B cell (primary cell): ENCODE measurements at regions of chr6 and their contacts with region 1.

Region 1: DNA sequence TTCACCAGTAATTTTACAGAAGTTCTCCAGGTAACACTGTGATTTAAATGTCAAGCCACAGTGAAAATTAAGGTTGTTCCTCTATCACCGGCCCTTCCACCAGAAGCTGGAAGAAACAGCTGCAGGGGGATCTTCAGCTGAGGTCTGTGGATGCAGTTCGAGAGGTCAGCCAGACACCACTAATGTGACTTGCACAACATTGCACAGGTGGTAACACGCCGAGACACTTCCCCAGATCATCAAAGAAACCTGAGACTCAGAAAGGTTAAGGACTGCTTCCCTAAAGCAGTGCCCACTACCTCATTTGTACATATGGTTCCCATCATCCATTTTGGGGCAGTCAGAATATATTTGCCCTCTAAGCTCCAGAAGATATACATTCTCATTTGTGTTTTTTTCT is 8.1 kb upstream of the SERPINB9 start:
- DNase-seq: peak; percentile 78
- ATAC-seq: peak; percentile 83
- H3K4me3 ChIP-seq: no peak overlapping the region
- H3K4me3 Mint-ChIP-seq: peak overlapping the region; percentile 64
- H3K27ac ChIP-seq: peak overlapping the region; percentile 54 to 62
- H3K27ac Mint-ChIP-seq: peak overlapping the region; percentile 85
- H3K4me1 ChIP-seq: peaks cover 24 to 27% of the 10 kb centered on the region in 2 donors
- H3K4me1 Mint-ChIP-seq: peaks cover 36% of the 10 kb centered on the region
- H3K27me3 ChIP-seq: no peaks in the 10 kb centered on the region
- H3K27me3 Mint-ChIP-seq: no peaks in the 10 kb centered on the region
- CTCF ChIP-seq: no peak

Region 2: GRCh38 chr6:2684059-2684749 is 227.0 kb before region 1 on chr6:
- CTCF ChIA-PET with region 1: no interaction called
- POLR2A ChIA-PET with region 1: no interaction called
- intact Hi-C with region 1: no loop called
- DNase-seq: no peak
- ATAC-seq: no peak
- H3K4me3 ChIP-seq: no peak overlapping the region
- H3K4me3 Mint-ChIP-seq: no peak overlapping the region
- H3K27ac ChIP-seq: no peak overlapping the region
- H3K27ac Mint-ChIP-seq: no peak overlapping the region
- H3K4me1 ChIP-seq: no peaks in the 10 kb centered on the region
- H3K4me1 Mint-ChIP-seq: no peaks in the 10 kb centered on the region
- H3K27me3 ChIP-seq: no peaks in the 10 kb centered on the region
- H3K27me3 Mint-ChIP-seq: no peaks in the 10 kb centered on the region
- CTCF ChIP-seq: no peak

Region 3: GRCh38 chr6:2804516-2804915 is 106.7 kb before region 1 on chr6:
- CTCF ChIA-PET with region 1: no interaction called
- POLR2A ChIA-PET with region 1: no interaction called
- intact Hi-C with region 1: no loop called
- DNase-seq: no peak
- ATAC-seq: no peak
- H3K4me3 ChIP-seq: no peak overlapping the region
- H3K4me3 Mint-ChIP-seq: no peak overlapping the region
- H3K27ac ChIP-seq: no peak overlapping the region
- H3K27ac Mint-ChIP-seq: no peak overlapping the region
- H3K4me1 ChIP-seq: no peaks in the 10 kb centered on the region
- H3K4me1 Mint-ChIP-seq: no peaks in the 10 kb centered on the region
- H3K27me3 ChIP-seq: no peaks in the 10 kb centered on the region
- H3K27me3 Mint-ChIP-seq: no peaks in the 10 kb centered on the region
- CTCF ChIP-seq: no peak

Region 4: DNA sequence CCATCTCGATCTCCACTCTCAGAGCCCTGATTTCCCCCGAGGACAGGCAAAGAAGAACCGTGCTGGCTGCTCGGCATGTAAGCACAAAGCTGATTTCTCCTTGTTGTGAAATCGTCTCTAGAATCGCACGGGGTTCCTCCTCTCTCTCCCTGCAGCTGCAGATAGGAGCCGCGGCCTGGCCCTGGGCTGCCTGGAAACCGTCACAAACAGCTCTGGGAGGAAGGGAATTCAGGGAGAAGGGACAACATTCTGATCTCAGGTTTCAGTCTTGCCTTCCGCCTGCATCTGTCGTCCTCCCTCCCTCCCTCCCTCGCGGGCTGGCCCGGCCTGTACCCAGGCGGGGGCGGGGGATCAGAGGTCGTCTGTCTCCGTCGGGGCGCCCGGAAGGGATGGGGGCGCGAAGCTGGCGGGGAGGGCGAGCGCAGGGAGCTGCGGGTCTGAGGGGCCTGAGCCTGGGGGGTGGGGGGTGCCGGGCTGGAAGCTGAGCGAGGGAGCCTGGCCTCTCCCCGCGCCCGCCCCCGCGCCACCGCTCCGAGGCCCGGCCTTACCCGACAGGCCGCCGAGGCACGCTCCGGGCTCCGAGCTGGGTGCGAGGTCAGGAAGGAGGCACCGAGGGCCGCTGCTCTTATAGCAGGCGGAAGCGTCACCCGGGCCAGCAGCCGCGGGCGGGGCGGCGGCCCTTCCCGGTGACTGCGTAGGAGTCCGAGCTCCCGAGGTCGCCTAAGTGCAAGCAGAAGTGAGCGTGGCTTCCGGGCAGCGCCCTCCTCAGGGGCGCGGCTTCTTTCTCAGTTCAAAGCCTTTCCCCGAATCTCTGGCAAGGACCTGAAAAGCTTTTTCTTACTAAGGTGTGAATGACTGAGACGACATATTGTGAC is 69.7 kb before region 1 on chr6 and contains the start of gene SERPINB1:
- CTCF ChIA-PET with region 1: interaction called, 165 read pairs
- POLR2A ChIA-PET with region 1: interaction called, 10 read pairs
- intact Hi-C with region 1: loop called (anchors 1 kb)
- DNase-seq: peak; percentile 86
- ATAC-seq: peak; percentile 79
- H3K4me3 ChIP-seq: peak within 1 kb of the TSS; percentile 55 to 85 (median 72)
- H3K4me3 Mint-ChIP-seq: peak within 1 kb of the TSS; percentile 90
- H3K27ac ChIP-seq: peak within 1 kb of the TSS; percentile 61 to 87
- H3K27ac Mint-ChIP-seq: peak within 1 kb of the TSS; percentile 96
- H3K4me1 ChIP-seq: peaks cover 35 to 45% of the 10 kb centered on the region in 2 donors
- H3K4me1 Mint-ChIP-seq: peaks cover 50% of the 10 kb centered on the region
- H3K27me3 ChIP-seq: no peaks in the 10 kb centered on the region
- H3K27me3 Mint-ChIP-seq: no peaks in the 10 kb centered on the region
- CTCF ChIP-seq: no peak
- total RNA-seq, gene SERPINB1: 47.4 and 52.5 TPM in 2 replicates

Region 5: GRCh38 chr6:2862712-2863181 is 48.4 kb before region 1 on chr6:
- CTCF ChIA-PET with region 1: interaction called, 10 read pairs
- POLR2A ChIA-PET with region 1: interaction called, 5 read pairs
- intact Hi-C with region 1: no loop called
- DNase-seq: peak; percentile 84
- ATAC-seq: peak; percentile 48
- H3K4me3 ChIP-seq: peak overlapping the region in 1 of 5 experiments; percentile 2
- H3K4me3 Mint-ChIP-seq: peak overlapping the region; percentile 72
- H3K27ac ChIP-seq: peak overlapping the region; percentile 91 to 97
- H3K27ac Mint-ChIP-seq: peak overlapping the region; percentile 95
- H3K4me1 ChIP-seq: peaks cover 71 to 75% of the 10 kb centered on the region in 2 donors
- H3K4me1 Mint-ChIP-seq: peaks cover 81% of the 10 kb centered on the region
- H3K27me3 ChIP-seq: no peaks in the 10 kb centered on the region
- H3K27me3 Mint-ChIP-seq: no peaks in the 10 kb centered on the region
- CTCF ChIP-seq: no peak

Region 6: GRCh38 chr6:2891768-2892170 is 19.4 kb before region 1 on chr6:
- CTCF ChIA-PET with region 1: interaction called, 18 read pairs
- POLR2A ChIA-PET with region 1: interaction called, 9 read pairs
- intact Hi-C with region 1: no loop called
- DNase-seq: peak; percentile 87
- ATAC-seq: peak; percentile 90
- H3K4me3 ChIP-seq: peak overlapping the region in 4 of 5 experiments; percentile 5 to 34 (median 16)
- H3K4me3 Mint-ChIP-seq: peak overlapping the region; percentile 86
- H3K27ac ChIP-seq: peak overlapping the region; percentile 59 to 76
- H3K27ac Mint-ChIP-seq: peak overlapping the region; percentile 94
- H3K4me1 ChIP-seq: peaks cover 30 to 32% of the 10 kb centered on the region in 2 donors
- H3K4me1 Mint-ChIP-seq: peaks cover 59% of the 10 kb centered on the region
- H3K27me3 ChIP-seq: no peaks in the 10 kb centered on the region
- H3K27me3 Mint-ChIP-seq: no peaks in the 10 kb centered on the region
- CTCF ChIP-seq: no peak